Lower leg skin (tissue), 4 donors: ENCODE measurements at regions of chr4 and their contacts with region 1.

Region 1: GRCh38 chr4:153018684-153019083 is 82.6 kb downstream of the FHDC1 start:
- DNase-seq: peak in 1 of 2 donors; percentile 40
- H3K4me3 ChIP-seq: no peak overlapping the region
- CTCF ChIP-seq: no peak
- POLR2A ChIP-seq: no peak

Region 2: DNA sequence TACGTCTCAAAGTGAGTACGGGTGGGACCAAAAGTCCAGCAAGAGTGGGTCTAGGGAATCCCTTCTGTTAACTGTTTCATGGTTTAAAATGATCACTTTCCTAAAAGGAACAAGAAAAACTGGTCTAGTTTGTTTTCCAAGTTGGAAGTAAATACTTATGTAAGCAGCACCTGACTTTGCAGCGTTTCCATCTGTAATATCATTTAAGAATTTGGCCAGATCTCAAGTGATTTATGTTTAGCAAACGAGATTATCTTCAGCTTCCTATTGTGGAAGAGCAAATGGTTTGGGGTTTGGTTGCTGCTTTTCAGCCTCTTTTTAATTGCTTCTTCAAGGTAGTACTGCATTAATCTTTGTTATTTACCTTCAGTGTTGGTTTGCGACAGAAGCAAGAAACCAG is 1559.3 kb before region 1 on chr4:
- intact Hi-C with region 1: loop called (anchors 5 kb)
- DNase-seq: no peak
- H3K4me3 ChIP-seq: no peak overlapping the region
- CTCF ChIP-seq: no peak
- POLR2A ChIP-seq: no peak

Region 3: DNA sequence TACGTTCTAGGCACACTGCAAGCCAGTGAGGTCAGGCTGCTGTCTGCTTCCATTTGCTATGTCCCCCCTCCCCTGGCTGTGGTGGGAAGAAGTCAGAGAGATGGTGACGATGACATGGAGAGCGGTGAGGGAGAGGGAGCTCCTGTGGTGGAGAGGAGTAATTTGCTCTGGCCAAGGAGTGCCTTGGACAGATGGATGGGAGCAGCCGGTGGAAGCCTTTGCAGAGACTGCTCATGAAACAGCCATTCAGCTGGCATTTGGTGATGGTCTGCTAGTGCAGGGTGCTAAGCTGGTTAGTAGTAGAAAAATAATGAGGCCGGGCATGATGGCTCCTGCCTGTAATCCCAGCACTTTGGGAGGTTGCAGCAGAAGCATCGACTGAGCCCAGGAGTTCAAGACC is 41.5 kb after region 1 on chr4:
- intact Hi-C with region 1: no loop called
- DNase-seq: peak in 1 of 2 donors; percentile 46
- H3K4me3 ChIP-seq: no peak overlapping the region
- CTCF ChIP-seq: no peak
- POLR2A ChIP-seq: no peak

Region 4: DNA sequence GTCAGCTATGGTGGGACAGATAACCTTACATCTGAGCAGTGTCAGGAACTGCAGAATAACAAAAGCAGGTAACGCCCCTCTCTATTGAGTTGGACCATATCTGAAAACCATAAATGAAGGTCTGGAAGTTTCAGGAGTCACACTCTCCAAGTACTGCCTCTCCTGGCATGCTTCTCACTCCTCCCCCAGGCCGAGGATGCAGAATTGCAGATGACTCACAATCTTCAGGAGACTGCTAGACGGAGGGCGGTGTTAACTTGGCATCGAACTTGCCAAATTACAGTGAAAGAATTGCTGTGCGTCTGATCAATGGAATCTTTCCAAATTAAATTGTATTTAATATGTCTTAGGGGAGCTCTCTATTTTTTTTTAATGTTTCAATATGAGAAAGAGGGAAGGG is 118.5 kb after region 1 on chr4:
- intact Hi-C with region 1: no loop called
- DNase-seq: peak in 1 of 2 donors; percentile 60
- H3K4me3 ChIP-seq: no peak overlapping the region
- CTCF ChIP-seq: no peak
- POLR2A ChIP-seq: no peak

Region 5: DNA sequence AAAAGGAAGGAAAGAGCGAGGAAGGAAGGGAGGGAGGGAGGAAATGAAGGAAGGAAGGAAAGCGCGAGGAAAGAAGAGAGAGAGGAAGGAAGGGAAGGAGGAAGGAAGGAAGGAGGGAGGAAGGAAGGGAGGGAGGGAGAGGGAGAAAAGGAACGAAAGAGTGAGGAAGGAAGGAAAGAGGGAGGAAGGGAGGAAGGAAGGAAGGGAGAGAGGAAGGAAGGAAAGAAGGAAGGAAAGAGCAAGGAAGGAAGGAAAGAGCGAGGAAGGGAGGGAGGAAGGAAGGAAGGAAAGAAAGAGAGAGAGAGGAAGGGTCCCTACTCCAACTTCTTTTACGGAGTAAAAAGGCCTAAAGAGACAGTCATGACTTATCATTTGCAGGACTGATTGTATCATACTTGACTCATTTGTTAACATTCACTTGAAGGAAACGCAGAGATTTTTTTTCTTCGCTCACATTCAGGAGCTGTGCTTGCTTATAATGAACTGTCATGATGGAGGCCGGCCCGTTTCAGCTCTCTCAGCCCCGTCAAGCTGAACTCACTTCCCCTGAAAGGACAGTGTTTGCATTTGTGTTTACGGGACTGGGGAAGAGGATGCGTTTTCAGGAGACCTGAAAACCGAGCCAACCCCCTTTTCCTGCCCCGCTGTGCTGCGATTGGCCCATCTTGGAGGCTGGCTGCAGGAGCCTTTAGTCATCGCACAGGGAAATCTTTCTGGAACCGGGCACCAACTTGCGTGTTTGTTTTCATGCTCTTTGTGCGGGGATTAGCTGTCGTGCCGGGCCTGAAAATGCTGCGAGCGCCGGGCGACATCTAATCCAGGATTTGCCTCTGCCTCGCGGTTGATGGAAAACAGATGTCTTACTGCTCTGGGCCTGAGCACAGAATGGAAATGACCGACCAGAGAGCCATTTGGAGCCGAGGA is 203.4 kb after region 1 on chr4:
- intact Hi-C with region 1: no loop called
- DNase-seq: peak; percentile 48 to 89
- H3K4me3 ChIP-seq: peak overlapping the region; percentile 27
- CTCF ChIP-seq: no peak
- POLR2A ChIP-seq: no peak

Region 6: DNA sequence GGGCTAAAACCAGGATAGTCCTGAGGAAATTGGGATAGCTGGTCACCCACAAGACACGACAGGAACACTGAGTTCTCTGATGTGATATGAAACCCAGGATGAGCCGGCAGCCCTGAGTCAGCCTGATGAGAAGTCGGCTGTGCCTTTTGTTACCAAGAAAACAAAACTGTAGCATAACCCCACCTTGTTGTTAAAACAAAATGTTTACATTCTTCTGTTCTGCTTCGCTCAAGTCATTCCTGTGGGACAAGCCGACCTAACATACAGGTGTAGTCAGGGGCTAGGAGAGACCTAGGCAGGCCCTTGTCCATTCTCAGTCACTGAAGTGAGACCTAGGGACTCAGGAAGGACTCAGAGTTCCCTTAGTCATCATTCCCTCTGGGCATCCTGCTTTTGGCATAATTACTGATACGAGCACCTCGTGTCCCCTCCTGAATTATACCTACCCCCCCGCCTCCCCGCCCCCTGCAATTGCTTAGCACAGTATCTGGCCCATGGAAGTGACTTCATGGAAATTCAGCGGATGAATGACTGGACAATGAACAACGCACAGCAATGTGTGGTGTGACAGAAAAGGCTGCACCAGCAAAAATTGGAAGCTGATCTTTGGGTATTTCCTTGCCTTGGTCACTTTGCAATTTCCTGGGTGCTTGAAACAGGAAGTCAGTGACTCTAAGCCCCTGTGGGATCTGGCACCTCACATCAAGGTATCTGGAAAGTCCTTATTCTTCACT is 633.5 kb after region 1 on chr4:
- intact Hi-C with region 1: no loop called
- DNase-seq: no peak
- H3K4me3 ChIP-seq: no peak overlapping the region
- CTCF ChIP-seq: no peak
- POLR2A ChIP-seq: no peak